ENCODE measurements at regions of chrX and their contacts with region 1.

Region 1: GRCh38 chrX:9995855-9996339 is 28.7 kb downstream of the CLDN34 start:
- DNase-seq: peak; percentile 94
- H3K4me3 ChIP-seq: no peak overlapping the region
- H3K27ac ChIP-seq: peak overlapping the region in 1 of 4 donors; percentile 18
- H3K4me1 ChIP-seq: peaks cover 0 to 11% (median 6%) of the 10 kb centered on the region in 4 donors
- H3K27me3 ChIP-seq: no peaks in the 10 kb centered on the region
- CTCF ChIP-seq: peak; percentile 87 to 97 (median 94)
- EP300 ChIP-seq: no peak
- POLR2A ChIP-seq: no peak

Region 2: DNA sequence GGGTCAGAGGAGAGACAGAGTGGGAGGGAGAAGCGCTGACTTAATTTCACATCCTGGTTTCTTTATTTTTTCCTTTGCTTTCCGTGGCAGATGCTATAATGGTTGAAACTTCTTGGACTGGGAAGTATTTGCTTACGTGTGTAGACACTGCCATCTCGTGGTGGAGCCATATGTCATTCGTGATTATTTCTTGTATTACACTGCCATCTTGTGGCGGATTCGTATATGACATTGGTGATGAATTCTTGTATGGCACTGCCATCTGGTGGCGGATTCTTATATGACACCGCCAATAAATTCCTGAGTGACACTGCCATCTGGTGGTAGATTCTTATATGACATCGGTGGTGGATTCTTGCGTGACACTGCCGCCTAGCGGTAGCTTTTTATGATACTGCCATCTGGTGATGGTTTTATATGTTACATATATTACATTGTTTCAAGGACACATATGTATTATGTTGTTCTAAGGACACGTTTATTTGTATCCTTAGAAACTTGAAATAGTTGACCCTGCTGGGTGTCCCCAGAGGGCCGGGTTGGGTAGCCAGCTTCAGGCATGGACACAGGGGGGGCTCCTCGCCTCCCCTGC is 123.6 kb after region 1 on chrX:
- intact Hi-C with region 1: loop called (anchors 2 kb)
- DNase-seq: peak; percentile 94
- H3K4me3 ChIP-seq: no peak overlapping the region
- H3K27ac ChIP-seq: peak overlapping the region in 3 of 4 donors; percentile 55 to 70 (median 63)
- H3K4me1 ChIP-seq: peaks cover 5 to 44% (median 42%) of the 10 kb centered on the region in 4 donors
- H3K27me3 ChIP-seq: no peaks in the 10 kb centered on the region
- CTCF ChIP-seq: peak; percentile 93 to 100 (median 100)
- EP300 ChIP-seq: no peak
- POLR2A ChIP-seq: no peak